ENCODE measurements at regions of chr1 and their contacts with region 1.

Region 1: DNA sequence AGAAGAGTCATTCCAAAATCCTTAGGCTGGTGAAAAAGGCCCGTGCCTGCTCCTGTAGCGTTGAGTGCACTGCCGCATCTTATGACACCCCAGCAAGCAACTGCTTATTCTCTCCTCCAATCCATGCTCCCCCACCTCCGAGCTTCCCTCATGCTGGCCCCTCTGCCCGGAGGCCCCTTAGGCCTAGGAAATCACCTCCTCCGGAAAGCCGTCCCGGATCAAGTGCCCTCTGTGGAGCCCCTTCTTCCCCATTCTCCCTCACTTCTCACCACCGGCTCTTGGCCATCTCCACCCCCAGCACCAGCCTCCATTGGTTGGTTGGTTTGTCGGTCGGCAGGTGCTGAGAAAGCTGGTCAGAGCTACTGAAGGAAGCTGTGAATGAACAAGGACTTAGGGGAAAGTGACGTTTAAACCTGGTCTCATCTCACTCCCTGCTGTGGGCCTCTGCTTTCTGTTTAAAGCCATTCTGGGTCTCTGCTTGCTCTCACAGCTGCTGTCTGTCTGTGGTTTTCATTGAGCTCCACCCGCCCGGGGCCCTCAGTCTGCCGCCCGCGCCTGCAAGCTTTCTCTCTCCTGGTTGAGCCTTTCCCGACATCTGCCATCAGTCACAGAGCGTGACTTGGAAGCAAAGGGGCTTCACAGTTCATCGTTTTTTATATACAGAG is 122.2 kb downstream of the KCNN3 start:
- DNase-seq: peak; percentile 76
- H3K4me3 Mint-ChIP-seq: peak overlapping the region; percentile 76
- H3K27ac Mint-ChIP-seq: peak overlapping the region; percentile 95
- H3K4me1 Mint-ChIP-seq: peaks cover 80% of the 10 kb centered on the region
- H3K27me3 Mint-ChIP-seq: peaks cover 6% of the 10 kb centered on the region

Region 2: DNA sequence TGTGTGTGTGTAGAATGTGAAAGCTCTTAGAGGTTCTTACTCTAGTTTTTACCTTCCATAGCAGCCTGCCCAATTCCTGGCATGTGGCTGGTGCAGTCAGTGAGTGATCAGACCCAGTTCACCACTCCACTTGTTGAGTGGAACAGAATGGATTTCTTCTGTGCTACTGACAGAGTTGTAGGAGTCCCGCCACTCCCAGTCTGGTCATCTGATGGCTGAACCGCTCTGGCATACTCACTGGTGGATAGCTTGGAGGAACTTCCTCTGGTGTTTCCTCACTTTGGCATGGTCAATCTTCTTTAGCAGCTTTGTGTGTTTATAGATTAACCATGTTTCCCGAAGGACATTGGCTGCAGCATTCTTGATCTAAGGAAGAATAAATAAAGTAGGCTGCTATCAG is 33.2 kb before region 1 on chr1:
- CTCF ChIA-PET with region 1: no interaction called
- POLR2A ChIA-PET with region 1: interaction called, 10 read pairs
- DNase-seq: peak; percentile 24
- H3K4me3 Mint-ChIP-seq: no peak overlapping the region
- H3K27ac Mint-ChIP-seq: no peak overlapping the region
- H3K4me1 Mint-ChIP-seq: peaks cover 15% of the 10 kb centered on the region
- H3K27me3 Mint-ChIP-seq: peaks cover 4% of the 10 kb centered on the region

Region 3: GRCh38 chr1:154760469-154760933 is 12.6 kb after region 1 on chr1:
- CTCF ChIA-PET with region 1: interaction called, 10 read pairs
- POLR2A ChIA-PET with region 1: no interaction called
- DNase-seq: peak; percentile 83
- H3K4me3 Mint-ChIP-seq: peak overlapping the region; percentile 51
- H3K27ac Mint-ChIP-seq: peak overlapping the region; percentile 52
- H3K4me1 Mint-ChIP-seq: peaks cover 44% of the 10 kb centered on the region
- H3K27me3 Mint-ChIP-seq: peaks cover 15% of the 10 kb centered on the region

Region 4: GRCh38 chr1:155105604-155106022 is 357.7 kb after region 1 on chr1:
- CTCF ChIA-PET with region 1: no interaction called
- POLR2A ChIA-PET with region 1: no interaction called
- DNase-seq: no peak
- H3K4me3 Mint-ChIP-seq: no peak overlapping the region
- H3K27ac Mint-ChIP-seq: no peak overlapping the region
- H3K4me1 Mint-ChIP-seq: no peaks in the 10 kb centered on the region
- H3K27me3 Mint-ChIP-seq: peaks cover 3% of the 10 kb centered on the region

Measured in activated CD4-positive, alpha-beta T cell treated with anti-CD3 and anti-CD28 coated beads, Interleukin-2, amount 10 ng/mL, durations not matched to agents 7 days and 5 days (primary cell).